Activated CD4-positive, alpha-beta memory T cell treated with anti-CD3 and anti-CD28 coated beads for 36 hours (primary cell): ENCODE measurements at regions of chr6 and their contacts with region 1.

Region 1: DNA sequence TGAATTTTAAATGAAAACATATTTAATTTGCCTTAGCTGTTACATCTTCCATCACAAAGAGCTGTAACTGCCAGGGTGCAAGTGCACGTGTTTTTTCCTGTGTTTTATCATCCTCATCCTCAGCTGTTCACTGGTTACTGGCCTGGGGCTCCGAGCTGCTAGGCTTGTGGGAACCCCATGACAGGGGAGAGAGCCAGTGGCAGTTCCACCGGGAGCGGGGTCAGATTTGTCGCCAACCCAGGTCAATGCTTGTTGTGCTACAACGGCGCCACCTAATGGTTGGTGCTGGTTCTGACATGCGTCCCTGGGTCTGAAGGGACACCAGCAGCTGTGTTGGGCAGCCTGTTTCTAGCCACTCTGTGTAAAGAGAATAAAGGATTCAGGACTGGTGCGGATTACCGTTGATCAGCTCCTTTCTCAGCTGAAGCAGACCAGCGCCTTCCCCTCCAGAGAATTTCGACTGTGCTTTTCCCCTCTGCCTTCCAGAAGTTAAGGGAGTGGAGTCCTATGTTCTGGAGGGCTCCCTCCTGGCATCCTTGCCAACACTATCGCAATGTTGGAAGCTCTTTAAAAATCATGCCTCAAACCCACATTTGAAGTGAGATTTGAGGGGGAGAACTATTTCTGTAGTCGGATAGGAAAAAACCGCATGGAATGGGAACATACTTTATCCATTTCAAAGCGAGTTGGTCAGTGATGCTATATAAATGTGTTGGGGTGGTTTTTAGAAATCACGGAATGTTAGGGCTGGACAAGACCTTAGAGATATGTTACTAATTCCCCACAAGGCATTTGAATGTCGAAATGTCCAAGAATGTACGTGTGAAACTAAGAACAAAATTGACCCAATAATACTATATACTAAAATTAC is 32.1 kb downstream of the SUMO4 start:
- DNase-seq: peak; percentile 95
- H3K4me3 Mint-ChIP-seq: no peak overlapping the region
- H3K27ac Mint-ChIP-seq: peak overlapping the region; percentile 58
- H3K4me1 Mint-ChIP-seq: peaks cover 5% of the 10 kb centered on the region
- H3K27me3 Mint-ChIP-seq: no peaks in the 10 kb centered on the region

Region 2: DNA sequence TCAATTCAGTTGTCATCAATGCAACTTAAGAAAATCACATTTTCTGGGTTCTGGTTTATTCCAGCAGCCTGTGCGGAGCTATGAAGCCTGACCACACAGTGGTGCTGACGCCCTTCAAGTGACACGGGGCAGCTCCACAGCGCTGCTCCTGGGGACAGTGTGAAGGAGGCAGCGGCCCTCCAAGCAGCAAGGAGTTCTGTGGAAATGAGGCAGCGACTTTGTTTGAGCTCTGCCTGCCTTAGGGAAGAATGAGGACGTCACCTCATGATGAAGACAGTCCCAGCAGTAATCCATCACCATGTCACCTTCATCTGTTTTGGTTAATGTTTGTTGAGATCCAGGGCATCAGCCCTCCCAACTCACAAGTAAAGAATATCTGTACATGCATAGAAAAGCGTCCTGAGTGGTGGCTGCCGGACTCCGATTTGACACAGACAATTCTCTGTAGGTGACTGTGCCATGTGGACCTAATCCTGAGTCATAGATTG is 853.9 kb before region 1 on chr6:
- CTCF ChIA-PET with region 1: interaction called, 6 read pairs
- POLR2A ChIA-PET with region 1: no interaction called
- intact Hi-C with region 1: loop called (anchors 5 kb)
- DNase-seq: peak; percentile 73
- H3K4me3 Mint-ChIP-seq: no peak overlapping the region
- H3K27ac Mint-ChIP-seq: no peak overlapping the region
- H3K4me1 Mint-ChIP-seq: peaks cover 6% of the 10 kb centered on the region
- H3K27me3 Mint-ChIP-seq: peaks cover 27% of the 10 kb centered on the region

Region 3: DNA sequence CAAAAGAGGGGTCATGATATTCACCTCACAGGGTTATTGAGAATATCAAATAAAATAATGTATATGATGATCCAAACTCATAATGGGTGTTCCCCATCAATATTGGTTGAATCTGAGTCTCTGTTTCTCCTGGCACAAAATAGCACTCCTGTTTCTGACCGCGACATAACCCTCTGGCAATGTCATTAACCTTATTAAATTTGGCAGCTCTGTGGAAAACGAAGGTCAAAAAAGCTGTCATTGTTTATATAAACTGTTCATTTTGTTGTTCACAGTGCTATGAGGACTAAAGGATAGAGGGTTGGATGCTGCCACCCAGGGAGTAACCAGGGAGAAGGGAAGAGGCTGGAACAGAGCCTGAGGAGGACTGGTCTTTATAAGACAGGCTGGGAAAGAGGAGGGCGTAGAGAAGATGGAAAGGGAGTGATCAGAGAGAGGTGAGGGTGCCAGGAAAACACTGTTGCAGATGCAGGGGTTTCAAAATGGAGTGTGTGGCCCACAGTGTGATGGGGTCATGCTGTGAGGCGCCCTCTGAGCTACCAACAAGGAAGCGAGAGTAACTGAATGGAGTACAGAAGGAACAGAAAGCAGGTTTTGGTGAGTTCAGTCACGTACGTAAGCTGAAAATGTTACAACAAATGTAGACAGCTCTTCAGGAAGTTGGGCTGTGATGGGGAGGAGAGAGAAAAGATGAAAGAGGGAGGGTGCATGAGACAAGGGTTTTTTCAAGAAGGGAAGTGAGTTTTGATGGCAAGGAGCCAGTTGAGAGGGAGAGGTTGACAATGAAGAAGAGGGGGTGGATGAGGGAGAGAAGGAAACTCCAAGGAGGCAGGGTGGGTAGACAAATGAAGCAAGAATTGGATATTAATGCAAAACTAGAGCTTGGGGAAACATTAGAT is 366.2 kb before region 1 on chr6:
- CTCF ChIA-PET with region 1: interaction called, 11 read pairs
- POLR2A ChIA-PET with region 1: no interaction called
- intact Hi-C with region 1: no loop called
- DNase-seq: peak; percentile 57
- H3K4me3 Mint-ChIP-seq: peak overlapping the region; percentile 33
- H3K27ac Mint-ChIP-seq: peak overlapping the region; percentile 93
- H3K4me1 Mint-ChIP-seq: peaks cover 50% of the 10 kb centered on the region
- H3K27me3 Mint-ChIP-seq: no peaks in the 10 kb centered on the region

Region 4: DNA sequence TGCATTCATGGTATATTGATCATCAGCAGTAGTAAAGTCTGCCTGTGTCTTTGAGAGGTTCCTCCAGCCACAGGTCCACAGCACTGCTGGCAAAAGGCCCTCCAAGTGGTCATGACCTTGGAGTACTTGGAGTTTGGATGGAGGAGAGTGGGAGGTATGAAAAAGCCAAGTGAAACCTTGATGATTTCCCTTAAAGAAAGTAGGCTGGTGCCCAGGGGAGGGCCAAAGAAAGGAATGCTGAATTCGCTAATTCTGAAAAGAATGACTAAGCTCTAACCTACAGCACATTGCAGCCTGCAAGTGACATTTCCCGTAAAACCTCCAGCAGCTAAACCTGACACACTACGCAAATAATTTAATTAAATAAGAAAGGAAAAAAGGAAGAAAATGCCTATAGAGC is 338.0 kb before region 1 on chr6:
- CTCF ChIA-PET with region 1: interaction called, 12 read pairs
- POLR2A ChIA-PET with region 1: no interaction called
- intact Hi-C with region 1: no loop called
- DNase-seq: peak; percentile 51
- H3K4me3 Mint-ChIP-seq: peak overlapping the region; percentile 45
- H3K27ac Mint-ChIP-seq: peak overlapping the region; percentile 93
- H3K4me1 Mint-ChIP-seq: peaks cover 67% of the 10 kb centered on the region
- H3K27me3 Mint-ChIP-seq: no peaks in the 10 kb centered on the region

Region 5: GRCh38 chr6:149324428-149324827 is 107.7 kb before region 1 on chr6:
- CTCF ChIA-PET with region 1: interaction called, 12 read pairs
- POLR2A ChIA-PET with region 1: interaction called, 3 read pairs
- intact Hi-C with region 1: no loop called
- DNase-seq: no peak
- H3K4me3 Mint-ChIP-seq: peak overlapping the region; percentile 40
- H3K27ac Mint-ChIP-seq: peak overlapping the region; percentile 81
- H3K4me1 Mint-ChIP-seq: peaks cover 80% of the 10 kb centered on the region
- H3K27me3 Mint-ChIP-seq: no peaks in the 10 kb centered on the region

Region 6: DNA sequence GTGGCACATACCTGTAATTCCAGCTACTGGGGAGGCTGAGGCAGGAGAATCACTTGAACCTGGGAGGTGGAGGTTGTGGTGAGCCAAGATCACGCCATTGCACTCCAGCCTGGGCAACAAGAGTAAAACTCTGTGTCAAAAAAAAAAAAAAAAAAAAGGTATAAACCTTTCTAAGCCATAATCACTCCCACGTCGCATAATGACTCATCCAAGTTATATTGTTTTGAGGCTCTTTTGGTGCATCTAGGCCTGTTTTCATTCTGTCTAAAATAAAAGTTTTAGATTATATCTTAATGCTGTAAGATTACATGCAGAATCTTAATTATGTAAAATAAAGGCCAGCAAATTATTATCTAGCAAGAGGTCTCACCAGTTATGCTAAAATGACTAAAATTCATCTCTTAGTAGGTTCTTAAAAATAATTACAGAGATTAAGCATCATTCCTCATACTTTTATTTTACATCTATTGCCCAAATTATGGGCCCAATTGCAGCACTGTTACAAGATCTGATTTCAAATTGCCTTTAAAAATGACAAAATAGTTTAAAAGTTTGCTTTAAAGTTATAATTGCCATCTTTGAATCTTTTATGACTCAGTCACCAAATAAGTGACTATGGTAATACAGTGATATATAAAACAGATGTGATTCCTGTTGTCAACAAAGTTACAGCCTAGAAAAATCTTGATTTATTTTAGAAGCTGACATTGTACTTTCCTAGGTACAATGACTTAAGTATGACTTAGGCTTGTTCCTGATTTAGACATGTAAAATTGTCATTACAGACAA is 42.4 kb before region 1 on chr6:
- CTCF ChIA-PET with region 1: interaction called, 10 read pairs
- POLR2A ChIA-PET with region 1: no interaction called
- intact Hi-C with region 1: no loop called
- DNase-seq: no peak
- H3K4me3 Mint-ChIP-seq: no peak overlapping the region
- H3K27ac Mint-ChIP-seq: peak overlapping the region; percentile 13
- H3K4me1 Mint-ChIP-seq: peaks cover 69% of the 10 kb centered on the region
- H3K27me3 Mint-ChIP-seq: no peaks in the 10 kb centered on the region

Region 7: DNA sequence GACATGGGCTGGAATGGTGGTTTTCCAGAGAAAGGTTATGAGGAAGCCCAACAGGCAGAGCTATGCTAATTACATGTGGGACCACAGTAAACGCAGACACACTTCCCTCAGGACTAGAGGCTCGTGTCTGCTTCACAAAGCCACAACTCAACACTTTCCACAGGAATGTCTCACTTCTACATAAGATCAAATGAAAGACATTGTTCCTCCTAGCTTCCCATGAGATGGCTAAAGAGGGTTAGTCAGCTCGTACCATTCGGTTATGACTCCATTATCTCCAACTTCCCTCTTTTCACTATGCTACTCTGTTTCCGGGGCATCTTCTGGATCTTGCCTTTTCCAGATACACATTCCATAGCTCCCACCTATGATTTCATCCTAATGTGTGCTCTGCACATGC is 81.8 kb after region 1 on chr6:
- CTCF ChIA-PET with region 1: interaction called, 52 read pairs
- POLR2A ChIA-PET with region 1: no interaction called
- intact Hi-C with region 1: loop called (anchors 1 kb)
- DNase-seq: no peak
- H3K4me3 Mint-ChIP-seq: no peak overlapping the region
- H3K27ac Mint-ChIP-seq: peak overlapping the region; percentile 23
- H3K4me1 Mint-ChIP-seq: peaks cover 59% of the 10 kb centered on the region
- H3K27me3 Mint-ChIP-seq: no peaks in the 10 kb centered on the region

Region 8: DNA sequence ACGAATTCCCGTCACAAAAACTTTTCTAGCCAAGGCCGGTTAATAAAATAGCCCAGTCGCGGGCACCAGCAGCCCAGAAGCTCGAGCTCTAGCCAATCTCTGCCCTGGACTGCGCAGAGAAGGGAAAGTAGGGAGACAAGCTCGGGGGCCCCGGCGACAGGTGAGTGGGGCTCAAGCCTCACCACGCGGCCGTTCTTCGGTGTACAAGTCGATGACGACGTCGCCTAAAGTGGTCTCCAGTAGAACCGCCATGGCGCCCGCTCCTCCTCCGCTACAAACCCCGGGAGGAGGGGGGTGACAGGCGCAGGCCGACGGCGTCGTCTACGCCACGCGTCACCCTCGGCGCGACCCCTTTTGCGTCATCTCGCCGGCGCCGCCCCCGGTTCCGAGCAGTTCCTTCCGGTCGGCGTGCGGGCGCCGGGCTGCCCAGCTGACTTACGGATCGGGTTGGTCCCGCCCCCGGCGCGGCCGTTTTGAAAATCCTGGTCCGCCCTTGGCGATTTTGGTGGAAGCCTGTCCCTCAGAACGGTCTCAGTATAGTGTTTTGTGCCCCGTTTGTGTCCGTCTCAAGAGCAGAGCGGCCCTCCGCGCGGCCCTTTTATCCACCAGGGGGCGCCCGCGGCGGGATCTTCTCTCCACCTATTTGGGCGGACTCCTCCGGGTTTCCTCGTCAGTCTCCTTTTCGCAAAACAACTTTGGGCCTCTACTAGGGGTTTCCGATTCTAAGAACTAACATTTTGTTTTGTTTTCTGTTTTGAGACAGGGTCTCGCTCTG is 113.8 kb after region 1 on chr6 and contains the start of gene PPIL4:
- CTCF ChIA-PET with region 1: no interaction called
- POLR2A ChIA-PET with region 1: no interaction called
- intact Hi-C with region 1: no loop called
- DNase-seq: peak; percentile 97
- H3K4me3 Mint-ChIP-seq: peak within 1 kb of the TSS; percentile 97
- H3K27ac Mint-ChIP-seq: peak within 1 kb of the TSS; percentile 97
- H3K4me1 Mint-ChIP-seq: peaks cover 38% of the 10 kb centered on the region
- H3K27me3 Mint-ChIP-seq: peaks cover 4% of the 10 kb centered on the region
- total RNA-seq, gene PPIL4: 21.5 to 23.6 TPM

Region 9: DNA sequence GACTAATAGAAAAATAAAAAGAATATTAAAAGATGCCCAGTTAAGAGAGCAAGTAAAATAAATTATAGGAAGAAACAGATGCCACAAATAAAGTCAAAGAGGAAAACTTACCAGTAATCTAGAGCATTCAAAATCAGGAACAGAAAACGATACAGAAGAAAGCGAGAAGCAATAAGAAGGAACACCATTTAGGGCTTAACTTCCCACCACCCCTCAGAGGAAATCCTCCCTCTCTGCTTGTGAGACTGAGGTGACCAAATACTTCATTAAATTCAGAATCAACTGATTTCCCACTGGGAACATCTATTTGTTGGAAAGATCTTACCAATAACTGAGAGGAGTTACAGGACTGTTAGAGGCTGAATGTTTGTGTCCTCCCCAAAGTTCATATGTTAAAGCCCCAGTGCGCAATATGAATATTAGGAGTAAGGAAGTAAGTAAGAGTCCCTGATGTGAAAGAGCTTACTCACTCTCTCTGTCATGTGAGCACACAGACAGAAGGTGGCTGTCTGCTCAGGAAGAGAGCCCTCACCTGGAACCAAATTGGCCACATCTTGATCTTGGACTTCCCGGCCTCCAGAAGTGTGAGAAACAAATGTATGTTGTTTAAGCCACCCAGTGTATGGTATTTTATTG is 196.9 kb after region 1 on chr6:
- CTCF ChIA-PET with region 1: no interaction called
- POLR2A ChIA-PET with region 1: no interaction called
- intact Hi-C with region 1: no loop called
- DNase-seq: no peak
- H3K4me3 Mint-ChIP-seq: no peak overlapping the region
- H3K27ac Mint-ChIP-seq: no peak overlapping the region
- H3K4me1 Mint-ChIP-seq: peaks cover 8% of the 10 kb centered on the region
- H3K27me3 Mint-ChIP-seq: no peaks in the 10 kb centered on the region